Astrocyte of the cerebellum (primary cell): ENCODE measurements at regions of chr5 and their contacts with region 1.

Region 1: DNA sequence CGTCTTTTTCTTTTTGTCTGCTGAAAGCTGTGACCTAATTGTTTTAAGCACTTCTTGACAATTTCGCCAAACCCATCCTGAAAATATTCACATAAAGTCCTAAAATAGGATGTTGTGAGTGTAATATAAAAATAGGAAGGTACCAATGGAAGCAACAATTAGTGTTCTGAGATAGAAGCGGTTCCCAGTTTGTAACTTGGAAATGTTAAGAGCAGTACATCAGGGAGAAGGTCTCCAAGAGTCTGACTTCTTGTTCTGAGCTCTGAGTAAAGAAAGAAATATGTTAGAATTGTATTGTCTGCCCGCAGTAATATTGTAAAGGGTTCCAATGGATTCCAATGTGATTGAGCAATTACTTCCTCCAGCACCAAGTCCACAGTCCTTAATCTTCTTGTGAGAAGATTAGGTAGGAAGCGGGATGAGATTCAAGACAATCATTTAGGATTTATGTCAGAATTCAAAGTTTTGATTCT is 3.9 kb downstream of the VCAN start:
- DNase-seq: peak; percentile 86
- H3K4me3 ChIP-seq: peak overlapping the region; percentile 80
- CTCF ChIP-seq: no peak

Region 2: DNA sequence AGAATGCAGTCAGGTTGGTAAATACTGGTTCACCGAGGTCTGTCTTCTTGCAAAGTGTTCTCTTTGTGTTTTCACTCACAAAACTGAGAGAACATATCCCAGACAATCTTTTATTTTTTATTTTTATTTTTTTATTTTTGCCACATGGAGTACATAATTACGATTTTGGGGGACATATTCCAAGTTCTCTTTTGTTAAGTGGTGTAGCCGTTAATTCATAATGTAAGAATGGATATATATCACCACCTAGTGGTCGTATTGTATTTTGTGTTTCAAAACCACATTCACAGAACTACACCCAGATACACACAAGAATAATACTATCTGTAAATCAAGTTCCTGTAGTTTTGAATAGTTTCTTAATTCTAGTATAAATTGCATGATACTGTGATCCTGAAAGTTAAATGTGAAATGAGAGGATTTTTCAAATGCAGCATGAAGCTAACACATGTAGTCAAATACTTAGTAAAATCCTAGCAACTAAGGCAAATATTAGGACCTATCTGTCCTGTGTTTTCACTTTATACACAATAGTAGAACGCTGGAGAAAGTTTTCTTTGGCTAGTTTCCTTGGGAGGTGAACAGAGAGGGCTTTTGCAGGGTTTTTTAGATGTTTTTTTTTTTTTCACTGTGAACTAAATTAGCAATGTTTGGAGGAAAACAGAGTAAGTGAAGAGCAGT is 88.8 kb after region 1 on chr5:
- in situ Hi-C with region 1: loop called (anchors 5 kb)
- DNase-seq: peak; percentile 62
- H3K4me3 ChIP-seq: no peak overlapping the region
- CTCF ChIP-seq: no peak